ENCODE measurements at regions of chr18 and their contacts with region 1.

Region 1: DNA sequence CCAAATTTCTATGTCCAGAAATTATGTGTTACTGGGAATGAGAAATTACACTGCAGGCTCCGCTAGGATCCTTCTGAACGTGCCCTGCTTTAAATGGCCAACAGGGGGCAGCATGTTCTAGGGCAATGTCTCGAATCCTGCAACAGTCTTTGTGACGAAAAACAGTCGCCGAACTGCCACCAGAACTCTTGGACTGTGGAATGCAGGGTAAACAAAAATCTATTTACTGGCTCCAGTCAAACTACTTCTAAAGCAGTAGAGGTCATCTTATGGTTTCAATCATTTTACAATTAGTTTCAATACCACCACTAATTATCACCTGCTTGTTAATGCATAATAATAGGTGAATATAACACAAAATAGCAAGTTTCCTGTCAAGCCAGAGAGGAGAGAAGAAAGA is 9.8 kb upstream of the ZNF397 start:
- DNase-seq: peak; percentile 65
- H3K4me3 Mint-ChIP-seq: peak overlapping the region; percentile 44
- H3K27ac Mint-ChIP-seq: peak overlapping the region; percentile 0
- H3K4me1 Mint-ChIP-seq: peaks cover 4% of the 10 kb centered on the region
- H3K27me3 Mint-ChIP-seq: no peaks in the 10 kb centered on the region

Region 2: DNA sequence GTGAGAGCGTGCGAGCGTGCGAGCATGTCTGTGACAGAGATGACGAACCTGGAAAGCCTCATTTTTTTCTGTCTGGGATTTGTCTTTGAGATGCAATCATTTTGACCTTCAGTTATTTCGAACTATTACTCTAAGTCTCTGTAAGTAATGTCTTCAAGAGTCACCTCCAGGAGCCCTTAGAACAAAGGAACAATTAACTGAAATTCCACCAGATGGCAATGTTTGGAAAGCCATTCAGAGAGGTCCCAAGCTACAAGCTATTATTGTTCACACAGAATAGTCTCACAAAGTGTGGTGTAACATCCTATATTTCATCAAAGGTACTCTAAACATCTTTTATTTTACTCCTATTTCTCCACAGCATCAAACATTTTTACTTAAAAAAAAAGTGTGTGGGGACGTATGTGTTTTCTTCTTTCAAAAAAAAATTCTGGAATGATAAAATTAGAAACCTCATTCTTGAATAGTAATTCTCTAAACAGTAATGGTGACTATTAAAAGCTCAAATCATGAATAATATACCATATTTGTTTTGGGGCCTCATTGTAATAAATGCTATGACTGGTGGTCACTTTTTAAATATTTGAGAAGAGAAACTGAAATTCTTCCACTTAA is 225.0 kb before region 1 on chr18:
- intact Hi-C with region 1: loop called (anchors 1 kb)
- DNase-seq: no peak
- H3K4me3 Mint-ChIP-seq: no peak overlapping the region
- H3K27ac Mint-ChIP-seq: no peak overlapping the region
- H3K4me1 Mint-ChIP-seq: no peaks in the 10 kb centered on the region
- H3K27me3 Mint-ChIP-seq: peaks cover 2% of the 10 kb centered on the region

Region 3: DNA sequence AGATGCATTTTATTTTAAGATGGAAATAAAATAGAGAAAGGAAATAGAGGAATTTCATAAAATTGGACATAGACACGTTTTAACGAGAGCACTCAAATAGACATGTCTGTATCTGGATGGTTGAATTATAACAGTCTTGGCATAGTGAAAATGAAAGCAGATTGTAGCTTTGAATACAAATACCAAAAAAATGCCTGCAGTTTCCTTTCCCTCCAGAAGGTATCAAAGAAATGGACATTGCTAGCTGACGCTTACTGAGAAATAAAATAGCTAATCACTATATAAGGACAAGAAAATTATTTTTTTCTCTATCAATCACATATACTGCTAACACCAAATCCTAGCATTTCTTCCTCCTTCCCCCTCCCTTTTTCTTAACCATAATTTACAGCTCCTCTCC is 201.3 kb before region 1 on chr18:
- intact Hi-C with region 1: loop called (anchors 5 kb)
- DNase-seq: no peak
- H3K4me3 Mint-ChIP-seq: peak overlapping the region; percentile 77
- H3K27ac Mint-ChIP-seq: peak overlapping the region; percentile 95
- H3K4me1 Mint-ChIP-seq: peaks cover 42% of the 10 kb centered on the region
- H3K27me3 Mint-ChIP-seq: no peaks in the 10 kb centered on the region

Region 4: DNA sequence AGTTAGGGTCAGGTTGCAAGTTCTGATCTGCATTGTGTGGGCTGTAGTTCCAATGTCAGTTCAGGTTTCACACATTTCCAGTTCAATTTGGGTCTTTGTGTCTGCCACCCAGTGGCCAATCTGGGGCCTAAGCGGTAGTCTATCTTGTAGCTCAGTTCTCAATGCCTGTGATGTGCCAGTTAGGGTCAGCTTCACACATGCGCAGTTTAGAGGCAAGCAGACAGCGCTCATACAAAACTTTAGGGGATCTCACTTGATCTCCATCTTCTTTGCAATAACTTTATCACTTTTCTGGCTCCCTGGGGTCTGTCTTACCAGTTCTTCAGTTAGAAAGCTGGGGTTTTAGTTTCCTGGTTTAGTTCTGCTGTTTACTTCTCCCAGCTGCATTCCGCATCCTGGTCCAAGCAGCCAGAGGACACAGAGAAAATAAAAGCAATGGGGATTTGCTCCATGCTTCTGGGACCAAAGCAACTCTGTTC is 124.1 kb after region 1 on chr18:
- intact Hi-C with region 1: loop called (anchors 1 kb)
- DNase-seq: peak; percentile 26
- H3K4me3 Mint-ChIP-seq: no peak overlapping the region
- H3K27ac Mint-ChIP-seq: no peak overlapping the region
- H3K4me1 Mint-ChIP-seq: peaks cover 4% of the 10 kb centered on the region
- H3K27me3 Mint-ChIP-seq: no peaks in the 10 kb centered on the region

Region 5: DNA sequence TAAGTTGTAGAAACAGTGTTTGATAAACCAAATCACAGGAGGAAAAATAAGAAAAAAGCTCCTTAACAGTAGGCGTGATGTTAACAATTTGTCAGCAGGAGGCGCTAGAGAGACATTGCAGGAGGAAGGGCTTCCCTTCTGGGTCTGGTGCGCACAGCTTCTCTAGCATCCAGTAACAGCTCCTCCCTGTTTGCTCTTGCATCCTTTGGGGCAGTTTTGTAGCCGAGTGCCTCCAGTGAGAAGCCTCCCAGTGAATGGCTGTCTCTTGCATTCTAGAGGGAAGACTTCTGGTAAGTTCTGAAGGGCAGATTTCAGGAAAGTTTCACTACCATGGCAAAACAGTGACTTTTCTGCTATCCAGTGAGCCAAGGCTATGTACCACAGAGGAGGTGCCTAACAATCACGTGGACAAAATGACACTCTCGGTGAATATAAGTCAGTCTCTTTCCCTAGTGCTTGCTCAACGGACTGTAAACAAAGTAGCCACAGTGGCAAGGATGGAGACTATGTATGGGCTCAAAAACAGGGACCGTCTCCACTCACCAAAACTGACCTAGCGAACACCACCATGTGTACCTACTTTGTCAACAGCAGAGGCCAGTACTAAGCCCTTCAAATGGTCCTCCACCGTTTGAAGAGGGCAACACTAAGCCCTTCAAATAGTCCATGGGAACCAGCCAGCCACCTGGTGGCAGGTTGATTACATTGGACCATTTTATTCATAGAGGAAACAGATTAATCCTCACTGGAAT is 155.7 kb after region 1 on chr18:
- intact Hi-C with region 1: loop called (anchors 1 kb)
- DNase-seq: peak; percentile 56
- H3K4me3 Mint-ChIP-seq: no peak overlapping the region
- H3K27ac Mint-ChIP-seq: no peak overlapping the region
- H3K4me1 Mint-ChIP-seq: peaks cover 9% of the 10 kb centered on the region
- H3K27me3 Mint-ChIP-seq: peaks cover 21% of the 10 kb centered on the region

Measured in activated T-helper 1 cell treated with anti-CD3 and anti-CD28 coated beads, Interleukin-12 subunit alpha, Interleukin-12 subunit beta, Interleukin-2, Interleukin-4 antibody, amounts not matched to agents 30 ng/mL and 10 ng/mL and 1 ng/mL, durations not matched to agents 14 hours and 24 hours and 36 hours (primary cell).